Esophagus squamous epithelium (tissue), 5 donors: ENCODE measurements at regions of chr5 and their contacts with region 1.

Region 1: GRCh38 chr5:90878549-90879196 is 320.1 kb downstream of the ADGRV1 start:
- DNase-seq: no peak
- H3K4me3 ChIP-seq: no peak overlapping the region
- H3K27ac ChIP-seq: peak overlapping the region; percentile 17 to 69 (median 34)
- H3K4me1 ChIP-seq: peaks cover 4 to 71% (median 10%) of the 10 kb centered on the region in 3 donors
- H3K27me3 ChIP-seq: no peaks in the 10 kb centered on the region
- CTCF ChIP-seq: no peak
- POLR2A ChIP-seq: no peak

Region 2: GRCh38 chr5:90700299-90700698 is 178.4 kb before region 1 on chr5:
- intact Hi-C with region 1: no loop called
- DNase-seq: no peak
- H3K4me3 ChIP-seq: no peak overlapping the region
- H3K27ac ChIP-seq: no peak overlapping the region
- H3K4me1 ChIP-seq: no peaks in the 10 kb centered on the region
- H3K27me3 ChIP-seq: no peaks in the 10 kb centered on the region
- CTCF ChIP-seq: no peak
- POLR2A ChIP-seq: no peak

Region 3: DNA sequence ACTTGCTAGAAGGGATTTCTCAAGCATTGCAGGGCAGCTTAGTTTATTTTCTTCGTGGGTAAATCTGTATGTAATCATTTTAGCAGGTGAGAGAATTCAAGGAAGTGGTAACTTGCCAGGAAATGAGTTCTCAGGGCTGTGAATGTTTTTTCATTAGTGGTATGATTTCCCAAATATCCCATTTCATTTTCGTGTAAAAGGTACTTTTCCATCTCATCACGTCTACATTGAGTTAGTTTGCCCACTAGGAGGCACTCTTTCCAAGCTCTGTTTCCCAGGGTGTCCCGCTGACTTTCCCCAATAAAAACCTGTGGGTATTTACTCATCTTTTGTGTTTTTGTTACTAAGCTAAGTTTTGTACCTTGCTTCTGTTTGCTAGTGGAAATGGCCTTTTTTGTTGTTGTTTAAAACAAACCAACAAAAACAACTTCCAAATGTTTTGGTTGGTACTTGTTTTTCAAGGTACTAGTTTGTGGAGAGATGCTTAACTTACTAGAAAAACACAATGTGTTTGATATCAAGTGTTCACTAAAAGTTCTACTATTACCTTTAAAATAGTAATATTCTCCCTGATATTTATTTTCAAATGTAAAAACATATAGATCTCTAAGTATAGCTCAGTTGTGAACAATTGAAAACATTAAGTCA is 53.5 kb after region 1 on chr5:
- intact Hi-C with region 1: loop called (anchors 10 kb)
- DNase-seq: no peak
- H3K4me3 ChIP-seq: no peak overlapping the region
- H3K27ac ChIP-seq: no peak overlapping the region
- H3K4me1 ChIP-seq: peaks cover 0 to 10% (median 0%) of the 10 kb centered on the region in 3 donors
- H3K27me3 ChIP-seq: no peaks in the 10 kb centered on the region
- CTCF ChIP-seq: peak; percentile 25 to 79 (median 66)
- POLR2A ChIP-seq: no peak

Region 4: GRCh38 chr5:90983148-90983547 is 104.5 kb after region 1 on chr5:
- intact Hi-C with region 1: no loop called
- DNase-seq: no peak
- H3K4me3 ChIP-seq: no peak overlapping the region
- H3K27ac ChIP-seq: no peak overlapping the region
- H3K4me1 ChIP-seq: no peaks in the 10 kb centered on the region
- H3K27me3 ChIP-seq: no peaks in the 10 kb centered on the region
- CTCF ChIP-seq: no peak
- POLR2A ChIP-seq: no peak